Left colon (tissue), 2 donors: ENCODE measurements at regions of chr10 and their contacts with region 1.

Region 1: GRCh38 chr10:63629363-63630084 is 108.3 kb downstream of the REEP3 start:
- DNase-seq: peak; percentile 97
- ATAC-seq: peak; percentile 73

Region 2: DNA sequence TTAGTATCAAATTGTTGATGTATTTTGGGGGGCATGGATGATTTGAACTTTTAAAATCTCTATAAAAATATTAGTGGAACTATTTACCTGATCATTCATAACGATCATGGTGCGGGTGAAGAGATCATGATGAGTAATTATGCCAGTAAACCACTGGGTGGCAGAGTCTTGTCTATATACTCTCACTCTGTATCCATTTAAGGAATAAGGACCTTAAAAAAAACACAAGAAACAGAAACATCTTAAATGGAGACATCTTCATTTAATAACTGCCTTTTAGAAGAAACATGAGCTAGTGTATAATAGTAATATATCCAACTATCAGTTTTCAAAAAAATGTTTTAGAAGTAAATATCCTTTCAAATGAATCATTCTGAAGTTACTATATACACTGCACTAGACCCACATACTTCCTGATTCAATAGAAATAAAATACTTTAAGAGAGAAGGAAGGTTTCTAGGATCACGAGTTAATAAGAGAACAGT is 412.4 kb before region 1 on chr10:
- intact Hi-C with region 1: loop called in 1 of 2 experiments (anchors 5 kb)
- DNase-seq: no peak
- ATAC-seq: peak; percentile 86

Region 3: DNA sequence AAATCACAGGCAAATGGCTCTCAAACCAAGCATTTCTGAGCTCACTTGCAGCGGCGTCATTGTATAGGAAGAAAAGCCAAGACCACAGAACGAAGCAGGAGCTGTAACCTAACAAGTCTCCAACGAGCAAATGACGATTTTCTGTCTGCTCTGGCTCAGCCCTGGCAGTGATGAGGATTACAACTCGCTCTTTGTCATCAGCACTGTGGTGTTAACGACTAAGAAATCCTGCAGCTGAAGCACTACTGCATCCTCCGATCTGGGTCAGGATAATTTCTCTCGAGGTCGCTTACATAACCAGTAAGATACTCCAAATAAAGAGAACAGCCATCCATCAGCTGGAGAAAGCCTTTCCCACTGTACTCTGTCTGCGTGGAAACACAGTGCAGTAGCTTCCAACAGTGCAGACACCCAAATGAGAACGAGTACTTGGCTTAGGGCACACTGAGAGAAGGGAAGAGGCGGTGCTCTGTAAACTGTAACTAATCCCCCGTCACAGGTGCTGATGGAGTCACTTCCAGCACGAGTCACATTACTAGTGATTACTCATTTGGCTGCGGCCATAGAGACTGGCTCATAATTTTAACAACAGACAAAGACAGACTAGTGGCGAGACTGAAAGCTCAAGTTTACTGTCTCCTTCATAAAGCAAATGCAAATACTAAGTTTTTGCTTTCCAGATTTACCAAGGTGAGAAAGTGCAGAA is 360.6 kb before region 1 on chr10:
- intact Hi-C with region 1: loop called in 1 of 2 experiments (anchors 5 kb)
- DNase-seq: peak; percentile 71 to 89
- ATAC-seq: peak; percentile 87

Region 4: GRCh38 chr10:63465293-63466143 is 164.0 kb before region 1 on chr10 and contains the start of gene JMJD1C:
- intact Hi-C with region 1: loop called in 1 of 2 experiments (anchors 10 kb)
- DNase-seq: peak; percentile 73 to 83
- ATAC-seq: peak; percentile 89
- total RNA-seq, gene JMJD1C: 56.1 to 75.0 TPM

Region 5: GRCh38 chr10:63562857-63563256 is 66.7 kb before region 1 on chr10:
- intact Hi-C with region 1: no loop called
- DNase-seq: no peak
- ATAC-seq: no peak